SK-N-SH (cell line): ENCODE measurements at regions of chr16 and their contacts with region 1.

Region 1: GRCh38 chr16:85420501-85421337 is 192.4 kb upstream of the GSE1 start:
- DNase-seq: peak; percentile 85
- H3K4me3 ChIP-seq: peak overlapping the region in 1 of 2 experiments; percentile 32; a peak in 1 of 4 replicates
- H3K27ac ChIP-seq: no peak overlapping the region
- H3K4me1 ChIP-seq: peaks cover 0 to 61% of the 10 kb centered on the region in 2 experiments; a peak in 3 of 4 replicates
- H3K27me3 ChIP-seq: no peaks in the 10 kb centered on the region
- CTCF ChIP-seq: peak; percentile 76
- EP300 ChIP-seq: no peak
- RAD21 ChIP-seq: peak; percentile 39

Region 2: DNA sequence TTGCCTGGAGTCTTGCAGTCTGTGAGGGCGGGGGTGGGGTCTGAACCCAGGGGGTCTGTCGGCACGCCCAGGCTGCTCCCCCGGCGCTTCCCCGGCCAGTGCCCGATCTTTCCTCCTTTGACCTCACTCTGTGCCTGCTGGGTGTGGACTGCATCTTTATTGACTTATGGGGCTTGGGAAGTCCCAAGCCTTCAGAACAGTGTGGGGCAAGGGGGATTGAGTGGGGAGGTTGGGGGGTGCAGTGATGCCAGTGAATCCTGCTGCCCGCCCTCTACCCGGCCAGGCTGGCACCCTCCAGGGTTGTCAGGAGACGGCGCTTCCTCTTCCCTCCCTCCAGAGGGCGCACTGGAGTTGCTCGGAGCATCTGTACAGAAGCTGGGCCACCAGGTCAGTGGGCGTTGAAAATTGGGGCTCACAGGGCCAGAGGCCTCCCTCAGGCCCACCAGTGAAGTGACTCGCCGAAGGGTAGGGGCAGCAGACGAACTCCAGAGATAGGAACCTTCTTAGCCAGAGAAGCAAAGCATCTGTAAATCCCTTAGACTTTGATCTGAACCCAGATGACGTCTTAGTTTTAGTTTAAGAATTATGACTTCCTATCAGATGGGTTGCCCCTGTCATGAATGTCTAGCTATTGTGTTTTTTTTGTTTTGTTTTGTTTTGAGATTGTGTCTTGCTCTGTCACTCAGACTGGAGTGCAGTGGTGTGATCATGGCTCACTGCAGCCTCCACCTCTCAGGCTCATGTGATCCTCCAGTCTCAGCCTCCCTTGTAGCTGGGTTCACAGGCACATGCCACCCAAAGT is 123.7 kb before region 1 on chr16:
- CTCF ChIA-PET with region 1: no interaction called
- POLR2A ChIA-PET with region 1: no interaction called
- DNase-seq: peak; percentile 72
- H3K4me3 ChIP-seq: no peak overlapping the region
- H3K27ac ChIP-seq: no peak overlapping the region
- H3K4me1 ChIP-seq: peaks cover 0 to 27% of the 10 kb centered on the region in 2 experiments; a peak in 1 of 4 replicates
- H3K27me3 ChIP-seq: no peaks in the 10 kb centered on the region
- CTCF ChIP-seq: peak; percentile 74
- EP300 ChIP-seq: no peak
- RAD21 ChIP-seq: peak; percentile 62

Region 3: DNA sequence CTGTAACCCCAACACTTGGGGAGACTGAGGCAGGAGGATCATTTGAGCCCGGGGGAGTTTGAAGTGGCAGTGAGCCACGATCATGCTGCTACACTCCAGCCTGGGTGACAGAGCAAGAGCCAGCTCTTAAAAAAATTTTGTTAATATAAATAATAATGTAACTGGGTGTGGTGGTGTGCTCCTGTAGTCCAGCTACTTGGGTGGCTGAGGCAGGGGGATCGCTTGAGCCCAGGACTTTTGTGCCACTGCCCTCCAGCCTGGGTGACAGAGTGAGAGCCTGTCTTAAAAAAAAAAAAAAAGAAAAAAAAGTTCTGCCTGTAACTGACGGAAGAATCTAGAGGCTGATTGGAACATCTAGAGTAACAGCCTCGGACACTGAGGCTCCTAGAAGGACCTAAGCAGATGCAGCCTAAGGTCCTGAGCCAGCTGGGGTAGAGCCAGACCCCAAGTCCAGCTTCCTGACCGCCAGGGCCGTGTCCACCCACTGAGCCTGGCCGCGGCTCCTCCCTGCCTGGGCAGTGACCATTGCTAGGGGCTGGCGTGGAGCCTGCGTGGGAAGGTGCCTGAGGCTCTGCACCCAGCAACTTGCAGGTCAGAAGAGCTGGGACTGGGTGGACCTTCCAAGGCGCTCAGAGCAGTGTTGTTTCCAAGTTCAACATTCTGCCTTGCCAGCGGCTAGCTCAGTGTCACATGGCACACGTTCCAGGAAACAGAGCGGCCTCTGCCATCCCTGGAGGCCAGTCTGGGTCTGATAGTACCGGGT is 99.0 kb before region 1 on chr16:
- CTCF ChIA-PET with region 1: no interaction called
- POLR2A ChIA-PET with region 1: no interaction called
- DNase-seq: peak; percentile 77
- H3K4me3 ChIP-seq: no peak overlapping the region; a peak in 1 of 4 replicates
- H3K27ac ChIP-seq: peak overlapping the region; percentile 39 to 94; a peak in 3 of 4 replicates
- H3K4me1 ChIP-seq: peaks cover 4 to 36% of the 10 kb centered on the region in 2 experiments; a peak in 1 of 4 replicates
- H3K27me3 ChIP-seq: no peaks in the 10 kb centered on the region
- CTCF ChIP-seq: no peak
- EP300 ChIP-seq: no peak
- RAD21 ChIP-seq: no peak

Region 4: GRCh38 chr16:85393674-85394483 is 26.8 kb before region 1 on chr16:
- CTCF ChIA-PET with region 1: interaction called, 25 read pairs
- POLR2A ChIA-PET with region 1: interaction called, 3 read pairs
- DNase-seq: peak; percentile 90
- H3K4me3 ChIP-seq: peak overlapping the region in 1 of 2 experiments; percentile 37; a peak in 1 of 4 replicates
- H3K27ac ChIP-seq: peak overlapping the region; percentile 75 to 99; a peak in 3 of 4 replicates
- H3K4me1 ChIP-seq: peaks cover 43 to 78% of the 10 kb centered on the region in 2 experiments
- H3K27me3 ChIP-seq: no peaks in the 10 kb centered on the region
- CTCF ChIP-seq: peak; percentile 88
- EP300 ChIP-seq: no peak
- RAD21 ChIP-seq: peak; percentile 71

Region 5: GRCh38 chr16:85402910-85403692 is 17.6 kb before region 1 on chr16:
- CTCF ChIA-PET with region 1: interaction called, 25 read pairs
- POLR2A ChIA-PET with region 1: no interaction called
- DNase-seq: no peak
- H3K4me3 ChIP-seq: no peak overlapping the region
- H3K27ac ChIP-seq: no peak overlapping the region
- H3K4me1 ChIP-seq: peaks cover 4 to 10% of the 10 kb centered on the region in 2 experiments; a peak in 1 of 4 replicates
- H3K27me3 ChIP-seq: no peaks in the 10 kb centered on the region
- CTCF ChIP-seq: no peak
- EP300 ChIP-seq: no peak
- RAD21 ChIP-seq: no peak

Region 6: GRCh38 chr16:85437166-85438055 is 16.7 kb after region 1 on chr16:
- CTCF ChIA-PET with region 1: interaction called, 23 read pairs
- POLR2A ChIA-PET with region 1: no interaction called
- DNase-seq: no peak
- H3K4me3 ChIP-seq: no peak overlapping the region
- H3K27ac ChIP-seq: no peak overlapping the region
- H3K4me1 ChIP-seq: peaks cover 0 to 8% of the 10 kb centered on the region in 2 experiments; a peak in 1 of 4 replicates
- H3K27me3 ChIP-seq: no peaks in the 10 kb centered on the region
- CTCF ChIP-seq: no peak
- EP300 ChIP-seq: no peak
- RAD21 ChIP-seq: no peak

Region 7: GRCh38 chr16:85446951-85447692 is 26.4 kb after region 1 on chr16:
- CTCF ChIA-PET with region 1: interaction called, 16 read pairs
- POLR2A ChIA-PET with region 1: no interaction called
- DNase-seq: no peak
- H3K4me3 ChIP-seq: no peak overlapping the region
- H3K27ac ChIP-seq: peak overlapping the region in 1 of 2 experiments; percentile 97; a peak in 2 of 4 replicates
- H3K4me1 ChIP-seq: peaks cover 0 to 69% of the 10 kb centered on the region in 2 experiments; a peak in 2 of 4 replicates
- H3K27me3 ChIP-seq: no peaks in the 10 kb centered on the region
- CTCF ChIP-seq: no peak
- EP300 ChIP-seq: no peak
- RAD21 ChIP-seq: no peak

Region 8: DNA sequence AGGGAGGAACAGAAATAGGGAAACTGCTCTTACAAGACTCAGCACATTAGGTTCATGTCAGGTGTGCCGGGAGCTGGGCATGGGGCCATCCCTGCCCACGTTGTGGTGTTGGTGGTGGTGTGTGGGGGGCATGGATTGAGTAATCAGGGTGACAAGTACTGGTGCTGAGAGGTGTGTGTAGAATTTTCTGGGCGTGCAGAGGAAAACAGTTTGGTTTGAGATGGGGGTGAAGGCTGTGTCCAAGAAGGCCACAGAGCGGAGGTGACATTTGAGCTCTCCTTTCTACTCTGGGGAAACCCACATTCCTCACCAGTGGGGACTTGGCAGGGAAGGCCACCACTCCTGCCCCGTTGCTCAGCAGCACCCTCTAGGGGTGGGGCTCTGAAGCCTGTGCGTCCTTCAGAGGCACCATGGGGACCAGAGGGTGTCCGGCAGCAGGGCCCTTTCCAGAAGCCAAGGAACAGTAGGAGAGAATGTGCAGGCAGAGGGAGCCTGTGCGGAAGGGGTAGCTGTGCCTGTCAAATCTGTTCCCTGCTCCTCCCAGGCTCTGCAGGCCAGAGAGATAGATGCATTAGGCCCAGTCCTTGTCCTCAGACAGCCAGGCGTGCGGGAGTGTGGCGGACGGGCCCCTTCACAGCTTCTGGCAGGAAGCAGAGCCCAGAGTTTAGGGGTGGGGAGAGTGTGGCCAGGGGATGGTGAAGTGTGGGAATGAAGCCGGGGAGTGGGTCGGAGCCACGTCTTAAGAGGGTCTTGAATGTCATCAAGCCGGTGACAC is 143.7 kb after region 1 on chr16:
- CTCF ChIA-PET with region 1: interaction called, 11 read pairs
- POLR2A ChIA-PET with region 1: interaction called, 3 read pairs
- DNase-seq: no peak
- H3K4me3 ChIP-seq: no peak overlapping the region
- H3K27ac ChIP-seq: peak overlapping the region in 1 of 2 experiments; percentile 89; a peak in 2 of 4 replicates
- H3K4me1 ChIP-seq: peaks cover 13 to 45% of the 10 kb centered on the region in 2 experiments; a peak in 3 of 4 replicates
- H3K27me3 ChIP-seq: no peaks in the 10 kb centered on the region
- CTCF ChIP-seq: peak; percentile 64
- EP300 ChIP-seq: no peak
- RAD21 ChIP-seq: no peak